AG04449 (cell line): ENCODE measurements at regions of chr18 and their contacts with region 1.

Region 1: DNA sequence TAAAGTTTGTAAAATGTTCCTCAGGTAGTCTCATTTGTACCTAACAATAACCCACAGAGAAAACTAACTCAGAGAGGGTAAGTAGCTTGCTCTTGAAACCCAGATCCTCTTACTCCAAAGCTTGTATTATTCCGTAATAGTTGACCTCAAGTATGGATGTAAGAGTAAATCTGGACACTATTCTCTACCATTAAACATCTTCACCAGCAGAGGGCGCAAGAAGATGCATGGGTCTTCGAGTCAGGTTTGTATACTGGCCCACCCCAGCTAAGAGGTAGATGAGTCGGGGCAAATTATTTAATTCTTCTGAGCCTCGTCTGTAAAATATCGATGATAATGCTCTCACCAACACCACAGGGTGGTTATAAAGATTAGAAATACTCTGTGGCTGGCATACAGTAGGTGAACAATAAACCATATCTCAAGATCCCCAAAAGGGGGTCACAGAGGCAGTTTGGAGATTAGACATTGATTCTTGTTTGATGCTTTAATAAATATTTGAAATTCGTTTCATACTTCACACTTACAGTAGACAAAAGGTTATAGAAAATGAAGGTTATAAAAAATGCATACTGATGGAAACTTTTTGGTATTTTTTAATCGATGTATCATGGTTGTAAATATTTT is 3.5 kb upstream of the CABLES1 start:
- DNase-seq: peak; percentile 37
- H3K4me3 ChIP-seq: no peak overlapping the region
- CTCF ChIP-seq: peak; percentile 67

Region 2: GRCh38 chr18:22691946-22692710 is 439.7 kb before region 1 on chr18:
- CTCF ChIA-PET with region 1: no interaction called
- POLR2A ChIA-PET with region 1: no interaction called
- DNase-seq: peak; percentile 88
- H3K4me3 ChIP-seq: no peak overlapping the region
- CTCF ChIP-seq: no peak

Region 3: DNA sequence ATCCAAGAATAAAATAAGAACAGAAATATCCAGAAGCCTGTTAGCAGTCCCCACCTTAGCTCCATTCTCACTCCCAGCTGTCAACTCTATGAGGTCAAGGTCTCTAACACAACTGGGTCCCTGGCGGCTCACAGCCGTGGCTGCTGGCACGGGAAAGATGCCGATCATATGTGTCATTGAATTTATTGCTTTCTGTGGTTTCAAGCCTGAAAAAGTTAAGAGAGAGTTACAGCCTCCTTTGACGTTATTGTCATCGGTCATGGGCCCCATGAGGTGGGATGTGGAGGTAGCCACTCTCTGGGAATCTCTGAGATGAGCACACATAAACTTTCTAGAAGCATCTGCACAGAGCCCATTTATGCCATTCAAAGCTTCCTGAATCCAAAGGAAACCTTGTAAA is 25.2 kb before region 1 on chr18:
- CTCF ChIA-PET with region 1: interaction called, 12 read pairs
- POLR2A ChIA-PET with region 1: no interaction called
- DNase-seq: peak; percentile 79
- H3K4me3 ChIP-seq: no peak overlapping the region
- CTCF ChIP-seq: no peak

Region 4: GRCh38 chr18:23356915-23357601 is 225.3 kb after region 1 on chr18:
- CTCF ChIA-PET with region 1: interaction called, 11 read pairs
- POLR2A ChIA-PET with region 1: no interaction called
- DNase-seq: peak; percentile 79
- H3K4me3 ChIP-seq: no peak overlapping the region
- CTCF ChIP-seq: no peak

Region 5: DNA sequence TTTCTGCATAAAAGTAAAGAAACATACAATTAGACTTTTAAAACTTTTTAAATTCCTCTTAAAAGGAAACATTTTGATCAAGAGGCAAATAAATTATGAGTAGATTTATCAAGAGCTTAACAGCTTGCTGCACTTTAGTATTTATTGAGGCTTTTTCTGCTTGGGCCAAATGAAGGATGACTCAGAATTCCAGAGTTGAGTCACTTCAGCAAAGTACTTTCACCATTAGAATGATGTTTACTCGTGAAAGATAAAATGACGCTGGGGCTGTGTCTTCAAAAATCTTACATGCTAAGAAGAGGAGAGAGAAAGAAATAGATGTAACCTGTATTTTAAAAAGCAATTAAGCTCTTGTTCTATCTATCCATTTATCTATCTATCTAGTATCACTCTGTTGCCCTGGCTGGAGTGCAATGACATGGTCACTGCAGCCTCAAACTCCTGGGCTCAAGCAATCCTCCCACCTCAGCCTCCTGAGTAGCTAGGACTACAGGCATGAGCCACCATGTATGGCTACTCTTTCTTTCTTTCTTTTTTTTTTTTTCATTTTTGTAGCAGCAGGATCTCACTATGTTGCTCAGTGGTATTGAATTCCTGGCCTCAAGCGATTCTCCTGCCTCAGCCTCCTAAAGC is 246.0 kb after region 1 on chr18:
- CTCF ChIA-PET with region 1: interaction called, 165 read pairs
- POLR2A ChIA-PET with region 1: no interaction called
- DNase-seq: peak; percentile 60
- H3K4me3 ChIP-seq: no peak overlapping the region
- CTCF ChIP-seq: no peak

Region 6: GRCh38 chr18:23416298-23416697 is 284.5 kb after region 1 on chr18:
- CTCF ChIA-PET with region 1: interaction called, 99 read pairs
- POLR2A ChIA-PET with region 1: no interaction called
- DNase-seq: no peak
- H3K4me3 ChIP-seq: no peak overlapping the region
- CTCF ChIP-seq: no peak

Region 7: GRCh38 chr18:23828426-23828825 is 696.6 kb after region 1 on chr18:
- CTCF ChIA-PET with region 1: no interaction called
- POLR2A ChIA-PET with region 1: no interaction called
- DNase-seq: no peak
- H3K4me3 ChIP-seq: no peak overlapping the region
- CTCF ChIP-seq: no peak